ENCODE measurements at regions of chr15 and their contacts with region 1.

Region 1: GRCh38 chr15:30859091-30859874 is 44.4 kb upstream of the FAN1 start:
- DNase-seq: no peak
- ATAC-seq: no peak; the same call in 1 of the 2 replicates
- H3K4me3 Mint-ChIP-seq: no peak overlapping the region
- H3K27ac Mint-ChIP-seq: no peak overlapping the region
- H3K4me1 Mint-ChIP-seq: no peaks in the 10 kb centered on the region; the same call in 1 of the 2 replicates
- H3K27me3 Mint-ChIP-seq: no peaks in the 10 kb centered on the region
- CTCF ChIP-seq: peak; percentile 51; the same call in 1 of the 2 replicates

Region 2: DNA sequence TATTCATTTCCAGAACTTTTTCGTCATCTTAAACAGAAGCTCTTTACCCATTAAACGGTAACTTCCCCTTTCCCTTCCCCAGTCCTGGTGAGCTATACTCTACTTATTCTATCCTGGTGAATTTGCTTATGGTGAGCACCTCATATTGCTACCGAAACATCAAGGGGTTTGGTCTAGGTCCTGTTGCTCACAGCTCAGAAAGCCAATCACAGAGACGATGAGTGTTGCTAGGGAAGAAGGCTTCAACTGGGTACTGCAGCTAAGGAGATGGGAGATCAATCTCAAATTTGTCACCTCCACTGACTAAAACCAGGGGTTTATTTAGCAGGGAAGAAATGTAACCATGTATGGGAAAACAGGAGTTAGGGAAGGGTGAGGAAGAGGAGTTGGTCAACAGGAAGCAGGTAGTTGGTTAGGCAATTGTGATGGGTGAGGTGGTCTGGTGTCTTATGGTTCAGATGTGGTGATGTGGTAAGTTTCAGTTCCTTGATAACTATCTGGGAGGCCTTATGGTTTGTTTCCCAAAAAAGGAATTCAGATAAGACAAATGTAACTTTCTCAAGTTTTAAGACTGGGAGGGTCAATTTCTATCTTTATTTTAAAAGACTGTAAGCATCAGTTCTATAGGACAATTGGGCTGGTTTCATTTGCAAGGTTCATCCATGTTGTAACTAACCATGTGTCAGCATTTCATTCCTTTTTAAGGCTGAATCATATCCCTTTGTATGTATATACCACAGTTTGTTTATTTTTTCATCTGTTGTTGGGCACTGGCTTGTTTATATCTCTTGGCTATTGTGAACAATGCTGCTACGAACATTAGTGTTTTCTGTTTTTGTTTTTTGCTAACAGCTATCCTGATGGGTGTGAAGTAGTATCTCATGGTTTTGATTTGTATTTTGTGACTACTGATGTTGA is 209.0 kb before region 1 on chr15:
- CTCF ChIA-PET with region 1: no interaction called
- POLR2A ChIA-PET with region 1: no interaction called
- DNase-seq: no peak
- ATAC-seq: no peak
- H3K4me3 Mint-ChIP-seq: no peak overlapping the region
- H3K27ac Mint-ChIP-seq: no peak overlapping the region
- H3K4me1 Mint-ChIP-seq: no peaks in the 10 kb centered on the region
- H3K27me3 Mint-ChIP-seq: no peaks in the 10 kb centered on the region
- CTCF ChIP-seq: no peak

Region 3: GRCh38 chr15:30794388-30794787 is 64.9 kb before region 1 on chr15:
- CTCF ChIA-PET with region 1: interaction called, 13 read pairs
- POLR2A ChIA-PET with region 1: no interaction called
- DNase-seq: no peak
- ATAC-seq: no peak
- H3K4me3 Mint-ChIP-seq: no peak overlapping the region
- H3K27ac Mint-ChIP-seq: no peak overlapping the region
- H3K4me1 Mint-ChIP-seq: peaks cover 6% of the 10 kb centered on the region; the same call in 1 of the 2 replicates
- H3K27me3 Mint-ChIP-seq: no peaks in the 10 kb centered on the region
- CTCF ChIP-seq: no peak

Region 4: DNA sequence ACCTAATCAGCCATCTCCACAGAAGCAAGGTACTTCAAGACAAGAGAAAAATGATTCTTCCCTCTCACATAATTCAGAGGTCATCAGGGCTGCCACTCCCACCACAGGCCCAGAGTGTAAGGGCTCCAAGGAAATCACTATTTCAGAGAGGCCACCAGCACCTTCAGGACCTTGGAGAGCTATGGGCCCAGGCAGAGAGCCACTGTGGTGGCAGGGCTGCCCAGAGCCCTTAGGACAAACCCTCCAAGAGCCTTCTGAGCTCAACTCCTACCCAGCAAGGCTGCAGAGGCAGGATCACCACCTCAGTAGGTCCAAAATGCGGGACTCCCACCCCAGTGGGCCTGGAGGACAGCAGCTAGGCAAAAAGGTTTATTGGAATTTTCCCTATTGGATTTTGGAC is 26.5 kb after region 1 on chr15:
- CTCF ChIA-PET with region 1: interaction called, 10 read pairs
- POLR2A ChIA-PET with region 1: no interaction called
- DNase-seq: peak; percentile 49
- ATAC-seq: peak; percentile 86
- H3K4me3 Mint-ChIP-seq: no peak overlapping the region
- H3K27ac Mint-ChIP-seq: no peak overlapping the region
- H3K4me1 Mint-ChIP-seq: peaks cover 3% of the 10 kb centered on the region
- H3K27me3 Mint-ChIP-seq: no peaks in the 10 kb centered on the region
- CTCF ChIP-seq: no peak

Region 5: DNA sequence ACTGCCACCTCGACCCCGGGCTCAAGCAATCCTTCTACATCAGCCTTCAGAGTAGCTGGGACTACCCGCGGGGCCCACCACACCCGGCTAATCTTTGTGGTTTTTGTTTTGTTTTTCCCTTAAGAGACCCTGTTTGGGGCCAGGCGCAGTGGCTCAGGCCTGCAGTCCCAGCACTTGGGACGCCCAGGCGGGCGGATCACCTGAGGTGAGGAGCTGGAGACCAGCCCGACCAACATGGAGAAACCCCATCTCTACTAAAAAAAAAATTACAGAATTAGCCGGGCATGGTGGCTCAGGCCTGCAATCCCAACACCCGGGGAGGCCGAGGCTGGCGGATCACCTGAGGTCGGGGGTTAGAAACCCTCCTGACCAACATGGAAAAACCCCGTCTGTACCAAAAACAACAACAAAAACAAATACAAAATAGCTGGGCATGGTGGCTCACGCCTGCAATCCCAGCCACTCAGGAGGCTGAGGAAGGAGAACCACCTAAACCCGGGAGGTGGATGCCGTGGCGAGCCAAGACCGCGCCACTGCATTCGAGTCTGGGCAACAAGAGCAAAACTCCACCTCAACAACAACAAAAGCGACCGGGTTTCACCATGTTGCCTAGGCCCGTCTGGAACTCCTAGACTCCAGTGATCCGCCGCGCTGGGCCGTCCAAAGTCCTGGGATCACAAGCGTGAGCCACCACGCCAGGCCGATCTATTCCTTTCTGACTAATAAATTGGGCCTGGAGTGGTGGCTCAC is 36.4 kb after region 1 on chr15:
- CTCF ChIA-PET with region 1: interaction called, 10 read pairs
- POLR2A ChIA-PET with region 1: no interaction called
- DNase-seq: no peak
- ATAC-seq: no peak
- H3K4me3 Mint-ChIP-seq: no peak overlapping the region
- H3K27ac Mint-ChIP-seq: no peak overlapping the region; the same call in 1 of the 2 replicates
- H3K4me1 Mint-ChIP-seq: peaks cover 17% of the 10 kb centered on the region
- H3K27me3 Mint-ChIP-seq: no peaks in the 10 kb centered on the region
- CTCF ChIP-seq: no peak

Region 6: GRCh38 chr15:31311735-31312619 is 452.7 kb after region 1 on chr15:
- CTCF ChIA-PET with region 1: no interaction called
- POLR2A ChIA-PET with region 1: no interaction called
- DNase-seq: no peak
- ATAC-seq: no peak
- H3K4me3 Mint-ChIP-seq: no peak overlapping the region
- H3K27ac Mint-ChIP-seq: no peak overlapping the region
- H3K4me1 Mint-ChIP-seq: peaks cover 33% of the 10 kb centered on the region
- H3K27me3 Mint-ChIP-seq: peaks cover 3% of the 10 kb centered on the region; the same call in 1 of the 2 replicates
- CTCF ChIP-seq: no peak

Measured in WTC11 (cell line).